Ascending aorta (tissue), 2 donors: ENCODE measurements at regions of chr12 and their contacts with region 1.

Region 1: GRCh38 chr12:57124259-57124877 is 3.9 kb upstream of the LRP1 start:
- DNase-seq: peak in 1 of 2 donors; percentile 88
- H3K4me3 ChIP-seq: no peak overlapping the region
- H3K27ac ChIP-seq: no peak overlapping the region
- H3K4me1 ChIP-seq: peaks cover 3 to 10% of the 10 kb centered on the region in 2 donors
- H3K27me3 ChIP-seq: no peaks in the 10 kb centered on the region
- CTCF ChIP-seq: peak; percentile 92 to 96 (median 92)

Region 2: GRCh38 chr12:57111031-57111734 is 13.2 kb before region 1 on chr12 and contains the start of gene STAT6:
- intact Hi-C with region 1: loop called (anchors 2 kb)
- DNase-seq: peak; percentile 80 to 92
- H3K4me3 ChIP-seq: peak within 1 kb of the TSS; percentile 76 to 90
- H3K27ac ChIP-seq: peak within 1 kb of the TSS; percentile 96 to 98
- H3K4me1 ChIP-seq: peaks cover 4 to 17% of the 10 kb centered on the region in 2 donors
- H3K27me3 ChIP-seq: no peaks in the 10 kb centered on the region
- CTCF ChIP-seq: no peak
- total RNA-seq, gene STAT6: 188 TPM

Region 3: DNA sequence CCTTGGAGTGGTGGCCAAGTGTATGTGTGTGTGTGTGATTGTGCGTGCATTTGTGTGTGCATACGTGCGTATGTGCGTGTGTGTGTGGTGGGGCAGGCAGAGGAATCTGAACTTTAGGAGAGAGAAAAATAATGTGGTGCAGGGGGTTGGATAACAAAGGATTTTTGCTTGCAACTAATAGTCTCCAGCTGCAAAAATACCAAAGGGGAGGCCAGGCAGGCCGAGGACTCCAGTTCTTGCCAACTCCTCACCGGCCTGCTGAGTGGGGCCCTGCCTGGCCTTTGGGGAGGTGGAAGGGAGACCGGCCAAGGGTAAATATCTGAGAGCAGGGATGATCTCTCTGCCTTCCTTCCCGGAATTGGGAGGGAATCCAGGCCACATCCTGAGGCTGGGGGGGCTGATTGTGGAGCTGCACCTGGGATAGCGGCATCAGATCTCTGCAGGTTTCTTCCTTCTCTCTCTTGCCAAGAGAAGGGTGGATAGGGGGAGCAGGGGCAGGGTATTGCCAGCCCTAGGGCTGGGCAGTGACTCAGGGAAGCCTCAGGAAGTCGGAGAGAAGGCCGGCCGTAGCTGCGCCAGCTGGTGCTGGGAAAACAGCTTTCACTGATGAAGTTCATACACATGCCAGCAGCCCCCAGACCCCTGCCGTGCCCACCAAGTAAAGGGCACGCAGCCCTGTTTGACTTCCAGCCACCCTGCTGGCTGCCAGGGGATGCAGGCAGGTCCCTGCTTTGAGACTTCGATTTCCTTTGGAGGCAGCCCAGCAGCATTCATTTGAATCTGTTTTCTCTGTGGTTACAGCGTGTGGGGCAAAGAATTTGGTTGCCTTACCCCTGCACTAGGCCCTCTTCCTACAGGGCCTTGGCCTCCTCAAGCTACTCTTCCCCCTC is 27.6 kb after region 1 on chr12:
- intact Hi-C with region 1: loop called (anchors 1 kb)
- DNase-seq: no peak
- H3K4me3 ChIP-seq: peak overlapping the region in 1 of 2 donors; percentile 29
- H3K27ac ChIP-seq: peak overlapping the region; percentile 89 to 98
- H3K4me1 ChIP-seq: peaks cover 61 to 69% of the 10 kb centered on the region in 2 donors
- H3K27me3 ChIP-seq: no peaks in the 10 kb centered on the region
- CTCF ChIP-seq: no peak

Region 4: DNA sequence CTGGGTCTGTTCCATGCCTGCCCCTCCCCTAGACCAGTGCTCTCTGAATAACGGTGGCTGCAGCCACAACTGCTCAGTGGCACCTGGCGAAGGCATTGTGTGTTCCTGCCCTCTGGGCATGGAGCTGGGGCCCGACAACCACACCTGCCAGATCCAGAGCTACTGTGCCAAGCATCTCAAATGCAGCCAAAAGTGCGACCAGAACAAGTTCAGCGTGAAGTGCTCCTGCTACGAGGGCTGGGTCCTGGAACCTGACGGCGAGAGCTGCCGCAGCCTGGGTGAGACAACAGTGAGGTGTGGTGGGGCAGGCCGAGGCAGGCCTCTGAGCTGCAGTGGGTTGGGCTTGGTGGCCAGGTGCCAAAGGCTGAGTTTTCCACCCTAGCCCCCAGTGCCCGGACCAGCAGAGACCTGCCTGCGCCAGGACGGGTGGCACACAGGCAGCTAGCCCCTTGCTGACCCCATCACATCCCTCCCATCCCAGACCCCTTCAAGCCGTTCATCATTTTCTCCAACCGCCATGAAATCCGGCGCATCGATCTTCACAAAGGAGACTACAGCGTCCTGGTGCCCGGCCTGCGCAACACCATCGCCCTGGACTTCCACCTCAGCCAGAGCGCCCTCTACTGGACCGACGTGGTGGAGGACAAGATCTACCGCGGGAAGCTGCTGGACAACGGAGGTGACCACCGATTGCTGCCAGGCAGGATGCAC is 51.2 kb after region 1 on chr12:
- intact Hi-C with region 1: loop called (anchors 1 kb)
- DNase-seq: peak; percentile 34 to 92
- H3K4me3 ChIP-seq: no peak overlapping the region
- H3K27ac ChIP-seq: peak overlapping the region; percentile 53 to 57
- H3K4me1 ChIP-seq: no peaks in the 10 kb centered on the region
- H3K27me3 ChIP-seq: no peaks in the 10 kb centered on the region
- CTCF ChIP-seq: peak; percentile 79 to 91 (median 90)